ENCODE measurements at regions of chr10 and their contacts with region 1.

Region 1: DNA sequence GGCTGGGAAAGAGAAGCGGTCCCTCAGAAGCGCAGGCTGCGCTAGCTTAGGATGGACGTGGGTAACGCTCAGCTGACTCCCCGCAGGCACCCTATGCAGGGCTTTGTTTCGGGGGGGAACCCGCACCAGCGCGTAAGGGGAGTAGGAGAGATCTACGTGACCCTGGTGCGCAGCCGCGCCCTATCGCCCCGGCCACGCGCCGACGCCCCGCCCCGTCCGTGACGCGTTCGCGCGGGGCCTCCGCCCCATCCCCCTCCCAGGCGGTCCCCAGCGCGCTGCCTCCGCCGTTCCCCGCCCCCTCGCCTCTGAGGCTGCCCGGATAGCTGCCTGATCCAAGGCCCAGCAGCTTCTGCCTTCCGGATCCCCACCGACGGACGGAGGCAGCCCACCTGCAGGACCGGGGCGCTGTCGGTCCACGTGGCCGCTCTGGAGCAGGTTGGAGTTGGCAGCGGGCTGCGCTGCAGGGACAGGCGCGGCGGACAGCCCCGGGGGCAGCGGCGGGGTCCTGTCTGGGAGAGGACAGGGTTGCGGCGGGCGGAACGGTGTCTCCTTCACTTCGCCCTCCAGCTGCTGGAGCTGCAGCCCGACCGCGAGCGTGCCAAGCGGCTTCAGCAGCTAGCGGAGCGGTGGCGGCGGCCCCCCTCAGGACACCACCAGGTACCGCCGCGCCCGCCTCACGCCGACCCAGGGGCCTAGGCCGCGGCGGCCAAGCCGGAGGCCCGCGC is at the start of gene VDAC2:
- DNase-seq: no peak
- H3K4me3 ChIP-seq: peak within 1 kb of the TSS; percentile 90
- H3K27ac ChIP-seq: peak within 1 kb of the TSS; percentile 99
- H3K27me3 ChIP-seq: no peaks in the 10 kb centered on the region
- CTCF ChIP-seq: no peak
- polyA plus RNA-seq, gene VDAC2: 154 and 201 TPM in 2 replicates

Region 2: GRCh38 chr10:75187961-75188426 is 22.4 kb before region 1 on chr10:
- CTCF ChIA-PET with region 1: interaction called, 13 read pairs
- POLR2A ChIA-PET with region 1: interaction called, 14 read pairs
- DNase-seq: no peak
- H3K4me3 ChIP-seq: no peak overlapping the region
- H3K27ac ChIP-seq: no peak overlapping the region
- H3K27me3 ChIP-seq: no peaks in the 10 kb centered on the region
- CTCF ChIP-seq: peak; percentile 77

Region 3: DNA sequence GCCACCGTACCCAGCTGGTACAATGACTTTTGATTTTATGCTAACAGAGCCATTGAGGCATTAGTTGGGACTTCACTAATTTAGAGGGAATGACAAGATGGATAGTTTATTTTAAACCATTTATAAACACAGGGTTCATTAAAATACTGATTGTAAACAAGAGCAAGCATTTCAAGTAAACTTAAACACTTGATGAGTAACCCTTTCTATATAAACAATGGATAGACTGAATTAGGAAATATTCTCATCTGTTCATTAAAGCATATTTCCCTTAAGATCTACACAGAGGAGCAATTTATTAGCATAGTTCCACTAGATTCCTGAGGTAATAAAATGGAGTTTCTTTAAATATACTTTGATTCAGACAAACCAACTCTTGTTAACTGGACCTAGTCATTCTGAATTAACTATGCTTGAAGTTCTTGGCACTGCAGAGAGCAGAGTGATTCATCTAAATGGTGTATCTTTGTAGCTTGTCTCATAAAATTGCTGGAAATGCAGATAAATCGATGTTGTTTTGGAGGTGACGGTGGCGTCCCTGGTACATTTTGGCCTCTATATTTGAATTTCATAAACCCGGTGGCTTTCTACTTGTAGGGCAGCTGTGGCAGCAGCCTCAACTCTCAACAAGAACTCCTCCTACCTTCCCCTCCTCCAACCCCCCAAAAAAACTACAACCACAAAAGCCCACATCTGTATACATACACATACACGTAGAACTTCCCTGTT is 15.2 kb before region 1 on chr10:
- CTCF ChIA-PET with region 1: interaction called, 8 read pairs
- POLR2A ChIA-PET with region 1: interaction called, 16 read pairs
- DNase-seq: peak; percentile 81
- H3K4me3 ChIP-seq: no peak overlapping the region
- H3K27ac ChIP-seq: peak overlapping the region; percentile 87
- H3K27me3 ChIP-seq: no peaks in the 10 kb centered on the region
- CTCF ChIP-seq: no peak

Region 4: DNA sequence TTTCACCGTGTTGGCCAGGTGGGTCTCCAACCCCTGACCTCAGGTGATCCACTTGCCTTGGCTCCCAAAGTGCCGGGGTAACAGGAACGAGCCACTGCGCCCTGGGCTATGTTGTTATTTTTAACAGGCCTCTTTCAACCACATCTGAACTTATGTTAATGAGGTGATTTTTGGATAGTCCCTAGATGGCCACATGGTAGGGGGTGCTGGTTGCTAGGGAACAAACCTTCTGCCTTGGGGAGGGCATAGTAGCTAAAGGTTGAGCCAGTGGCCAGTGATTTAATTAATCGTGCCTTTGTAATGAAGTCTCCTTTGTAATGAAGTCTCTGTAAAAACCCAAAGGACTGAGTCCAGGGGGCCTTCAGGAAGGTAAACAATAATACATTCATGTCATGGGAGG is 16.2 kb after region 1 on chr10:
- CTCF ChIA-PET with region 1: interaction called, 14 read pairs
- POLR2A ChIA-PET with region 1: interaction called, 49 read pairs
- DNase-seq: no peak
- H3K4me3 ChIP-seq: no peak overlapping the region
- H3K27ac ChIP-seq: no peak overlapping the region
- H3K27me3 ChIP-seq: no peaks in the 10 kb centered on the region
- CTCF ChIP-seq: no peak

Region 5: GRCh38 chr10:75235375-75236177 is 25.1 kb after region 1 on chr10 and contains the start of gene COMTD1:
- CTCF ChIA-PET with region 1: interaction called, 14 read pairs
- POLR2A ChIA-PET with region 1: interaction called, 5 read pairs
- DNase-seq: peak; percentile 57
- H3K4me3 ChIP-seq: peak within 1 kb of the TSS; percentile 66
- H3K27ac ChIP-seq: no peak within 1 kb of the TSS
- H3K27me3 ChIP-seq: no peaks in the 10 kb centered on the region
- CTCF ChIP-seq: peak; percentile 100
- polyA plus RNA-seq, gene COMTD1: 2.0 and 2.3 TPM in 2 replicates